Activated CD4-positive, alpha-beta memory T cell treated with anti-CD3 and anti-CD28 coated beads for 36 hours (primary cell): ENCODE measurements at regions of chr14 and their contacts with region 1.

Region 1: DNA sequence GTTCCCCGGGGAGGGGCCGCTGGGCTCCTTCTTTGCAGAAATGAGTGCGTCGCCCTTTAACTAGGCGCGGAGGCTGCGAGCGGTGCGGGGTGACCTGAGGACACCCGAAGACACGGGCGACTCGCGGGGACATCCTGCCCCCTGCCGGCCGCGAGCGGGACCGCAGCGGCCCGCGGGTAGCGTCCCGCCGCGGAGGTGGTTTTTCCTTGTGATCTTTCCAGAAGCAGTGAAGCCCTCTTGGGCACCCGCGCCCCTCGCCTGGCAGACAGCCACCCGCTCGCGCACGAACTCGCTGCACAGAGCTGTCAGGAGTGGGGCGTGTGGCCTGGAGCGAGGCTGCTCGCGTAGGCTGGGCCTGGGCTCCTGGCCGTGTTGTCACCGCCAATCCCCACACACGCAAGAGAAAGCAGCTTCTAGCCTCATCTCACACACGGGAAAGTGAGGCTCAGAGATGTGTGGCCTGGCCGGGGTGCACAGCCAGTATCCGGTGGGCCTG is 67.2 kb downstream of the DIO3 start:
- DNase-seq: peak; percentile 81
- H3K4me3 Mint-ChIP-seq: no peak overlapping the region
- H3K27ac Mint-ChIP-seq: no peak overlapping the region
- H3K4me1 Mint-ChIP-seq: peaks cover 3% of the 10 kb centered on the region
- H3K27me3 Mint-ChIP-seq: peaks cover 1% of the 10 kb centered on the region

Region 2: DNA sequence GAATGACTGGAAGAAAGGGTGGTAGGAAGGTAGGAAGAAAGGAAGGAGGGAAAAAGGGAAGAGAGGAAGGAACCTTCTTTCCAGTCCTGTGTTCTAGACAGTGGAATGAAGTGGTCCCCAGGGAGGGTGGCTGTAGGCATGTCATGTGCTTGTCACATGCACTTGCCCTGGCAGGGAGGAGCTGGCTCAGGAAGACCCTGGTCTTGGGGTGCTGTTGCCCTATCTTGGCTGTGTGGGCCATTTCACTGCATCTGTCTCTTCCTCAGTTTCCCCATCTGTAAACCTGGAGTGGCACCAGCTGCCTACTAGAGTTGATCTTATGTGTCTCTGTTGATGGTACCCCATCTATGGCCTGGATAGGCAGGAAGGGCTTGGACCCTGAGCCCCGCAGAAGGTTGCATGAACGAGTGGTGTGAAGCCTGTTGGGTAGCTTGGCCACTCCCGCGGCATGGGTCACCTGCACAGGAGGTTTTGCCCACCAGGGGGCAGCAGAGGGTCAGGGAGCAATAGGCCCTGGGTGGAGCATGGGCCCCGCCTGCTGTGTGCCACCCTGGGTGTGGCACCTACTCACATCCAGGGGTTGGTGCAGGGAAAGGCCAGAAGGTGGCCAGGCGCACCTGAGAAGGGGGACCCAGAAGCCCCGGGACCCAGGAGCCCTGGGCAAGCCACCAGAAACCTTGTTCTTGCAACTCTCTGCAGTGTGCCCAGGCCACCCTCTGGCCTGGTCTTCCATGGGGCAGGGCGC is 777.5 kb before region 1 on chr14:
- CTCF ChIA-PET with region 1: interaction called, 3 read pairs
- POLR2A ChIA-PET with region 1: no interaction called
- intact Hi-C with region 1: loop called (anchors 2 kb)
- DNase-seq: peak; percentile 86
- H3K4me3 Mint-ChIP-seq: no peak overlapping the region
- H3K27ac Mint-ChIP-seq: no peak overlapping the region
- H3K4me1 Mint-ChIP-seq: no peaks in the 10 kb centered on the region
- H3K27me3 Mint-ChIP-seq: no peaks in the 10 kb centered on the region

Region 3: GRCh38 chr14:100904307-100905087 is 724.0 kb before region 1 on chr14:
- CTCF ChIA-PET with region 1: no interaction called
- POLR2A ChIA-PET with region 1: no interaction called
- intact Hi-C with region 1: loop called (anchors 5 kb)
- DNase-seq: no peak
- H3K4me3 Mint-ChIP-seq: no peak overlapping the region
- H3K27ac Mint-ChIP-seq: no peak overlapping the region
- H3K4me1 Mint-ChIP-seq: no peaks in the 10 kb centered on the region
- H3K27me3 Mint-ChIP-seq: peaks cover 40% of the 10 kb centered on the region